ENCODE measurements at regions of chr15 and their contacts with region 1.

Region 1: GRCh38 chr15:41557673-41558399 is 1.2 kb upstream of the TYRO3 start:
- DNase-seq: peak; percentile 52 to 89 (median 70)
- ATAC-seq: peak; percentile 87
- H3K4me3 ChIP-seq: no peak overlapping the region
- H3K4me3 Mint-ChIP-seq: peak overlapping the region; percentile 90
- H3K27ac ChIP-seq: peak overlapping the region in 1 of 2 donors; percentile 0
- H3K27ac Mint-ChIP-seq: peak overlapping the region; percentile 73
- H3K4me1 ChIP-seq: peaks cover 26% of the 10 kb centered on the region
- H3K4me1 Mint-ChIP-seq: peaks cover 31% of the 10 kb centered on the region
- H3K27me3 ChIP-seq: peaks cover 6 to 8% of the 10 kb centered on the region in 2 experiments
- H3K27me3 Mint-ChIP-seq: peaks cover 20% of the 10 kb centered on the region
- CTCF ChIP-seq: peak; percentile 89

Region 2: DNA sequence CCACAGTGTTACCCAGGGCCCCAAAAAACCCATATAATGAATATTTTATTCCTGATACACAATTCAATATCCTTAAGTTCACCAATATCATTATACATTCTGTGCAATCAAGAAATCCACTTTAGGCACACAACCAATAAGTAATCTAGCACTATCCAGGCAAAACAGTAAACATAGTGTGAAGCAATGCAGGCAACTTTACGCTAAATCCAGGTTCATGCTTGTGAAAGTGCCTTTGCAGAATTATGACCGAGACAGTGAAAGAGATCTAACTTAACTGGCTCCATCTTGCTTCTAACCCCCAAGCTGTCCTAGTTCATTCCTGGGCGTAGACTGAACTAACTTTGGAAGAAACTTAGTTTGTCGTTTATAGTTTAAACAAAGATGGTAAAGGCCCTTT is 407.6 kb before region 1 on chr15:
- CTCF ChIA-PET with region 1: no interaction called
- POLR2A ChIA-PET with region 1: no interaction called
- intact Hi-C with region 1: no loop called
- DNase-seq: no peak
- ATAC-seq: no peak
- H3K4me3 ChIP-seq: no peak overlapping the region
- H3K4me3 Mint-ChIP-seq: no peak overlapping the region
- H3K27ac ChIP-seq: no peak overlapping the region
- H3K27ac Mint-ChIP-seq: peak overlapping the region; percentile 53
- H3K4me1 ChIP-seq: peaks cover 9% of the 10 kb centered on the region
- H3K4me1 Mint-ChIP-seq: peaks cover 12% of the 10 kb centered on the region
- H3K27me3 ChIP-seq: no peaks in the 10 kb centered on the region
- H3K27me3 Mint-ChIP-seq: no peaks in the 10 kb centered on the region
- CTCF ChIP-seq: no peak

Region 3: GRCh38 chr15:41332788-41333562 is 224.9 kb before region 1 on chr15 and contains the start of gene NUSAP1:
- CTCF ChIA-PET with region 1: no interaction called
- POLR2A ChIA-PET with region 1: no interaction called
- intact Hi-C with region 1: no loop called
- DNase-seq: peak in 3 of 14 experiments; percentile 46 to 65 (median 58)
- ATAC-seq: peak; percentile 3
- H3K4me3 ChIP-seq: peak within 1 kb of the TSS; percentile 77
- H3K4me3 Mint-ChIP-seq: peak within 1 kb of the TSS; percentile 95
- H3K27ac ChIP-seq: peak within 1 kb of the TSS in 1 of 2 donors; percentile 38
- H3K27ac Mint-ChIP-seq: peak within 1 kb of the TSS; percentile 78
- H3K4me1 ChIP-seq: peaks cover 23% of the 10 kb centered on the region
- H3K4me1 Mint-ChIP-seq: peaks cover 25% of the 10 kb centered on the region
- H3K27me3 ChIP-seq: no peaks in the 10 kb centered on the region
- H3K27me3 Mint-ChIP-seq: no peaks in the 10 kb centered on the region
- CTCF ChIP-seq: no peak
- total RNA-seq, gene NUSAP1: 2.2 to 2.3 TPM

Region 4: DNA sequence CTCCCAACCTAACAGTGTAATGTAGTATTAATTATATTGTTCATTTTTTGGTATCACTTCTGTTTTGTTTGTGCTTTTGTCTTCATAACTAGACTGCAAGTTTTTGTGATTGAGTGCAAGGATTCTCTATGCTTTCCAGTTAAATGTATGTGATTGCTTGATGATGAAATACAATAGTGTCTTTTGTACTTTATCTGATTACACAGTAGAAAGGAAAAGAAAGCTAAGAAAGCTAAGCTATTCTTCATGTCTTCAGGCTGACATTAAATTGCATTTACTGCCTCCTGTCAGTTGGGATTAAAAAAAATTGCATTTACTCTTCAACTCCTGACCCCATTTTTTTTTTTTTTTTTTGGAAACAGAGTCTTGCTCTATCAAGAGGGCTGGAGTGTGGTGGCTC is 112.4 kb before region 1 on chr15:
- CTCF ChIA-PET with region 1: no interaction called
- POLR2A ChIA-PET with region 1: no interaction called
- intact Hi-C with region 1: no loop called
- DNase-seq: no peak
- ATAC-seq: no peak
- H3K4me3 ChIP-seq: no peak overlapping the region
- H3K4me3 Mint-ChIP-seq: no peak overlapping the region
- H3K27ac ChIP-seq: no peak overlapping the region
- H3K27ac Mint-ChIP-seq: no peak overlapping the region
- H3K4me1 ChIP-seq: peaks cover 9% of the 10 kb centered on the region
- H3K4me1 Mint-ChIP-seq: peaks cover 20% of the 10 kb centered on the region
- H3K27me3 ChIP-seq: no peaks in the 10 kb centered on the region
- H3K27me3 Mint-ChIP-seq: no peaks in the 10 kb centered on the region
- CTCF ChIP-seq: no peak

Region 5: DNA sequence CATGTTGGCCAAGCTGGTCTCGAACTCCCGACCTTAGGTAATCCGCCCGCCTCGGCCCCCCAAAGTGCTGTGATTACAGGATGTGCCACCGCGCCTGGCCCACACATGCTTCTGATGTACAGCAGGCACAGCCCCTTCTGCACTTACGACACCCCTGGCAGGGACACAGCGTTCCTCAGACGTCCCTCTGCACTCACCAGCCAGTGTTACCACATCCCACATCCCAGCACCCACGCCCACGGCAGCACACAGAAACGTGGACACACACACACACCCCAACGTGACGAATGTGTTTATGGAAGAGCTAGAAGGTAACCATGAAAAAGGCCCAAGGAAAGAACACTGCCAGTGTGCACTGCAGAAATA is 13.2 kb before region 1 on chr15:
- CTCF ChIA-PET with region 1: interaction called, 21 read pairs
- POLR2A ChIA-PET with region 1: interaction called, 22 read pairs
- intact Hi-C with region 1: loop called in 1 of 2 experiments (anchors 2 kb)
- DNase-seq: peak in 3 of 14 experiments; percentile 23 to 50 (median 44)
- ATAC-seq: no peak
- H3K4me3 ChIP-seq: peak overlapping the region; percentile 98
- H3K4me3 Mint-ChIP-seq: peak overlapping the region; percentile 98
- H3K27ac ChIP-seq: no peak overlapping the region
- H3K27ac Mint-ChIP-seq: peak overlapping the region; percentile 85
- H3K4me1 ChIP-seq: peaks cover 16% of the 10 kb centered on the region
- H3K4me1 Mint-ChIP-seq: peaks cover 29% of the 10 kb centered on the region
- H3K27me3 ChIP-seq: no peaks in the 10 kb centered on the region
- H3K27me3 Mint-ChIP-seq: no peaks in the 10 kb centered on the region
- CTCF ChIP-seq: no peak

Region 6: DNA sequence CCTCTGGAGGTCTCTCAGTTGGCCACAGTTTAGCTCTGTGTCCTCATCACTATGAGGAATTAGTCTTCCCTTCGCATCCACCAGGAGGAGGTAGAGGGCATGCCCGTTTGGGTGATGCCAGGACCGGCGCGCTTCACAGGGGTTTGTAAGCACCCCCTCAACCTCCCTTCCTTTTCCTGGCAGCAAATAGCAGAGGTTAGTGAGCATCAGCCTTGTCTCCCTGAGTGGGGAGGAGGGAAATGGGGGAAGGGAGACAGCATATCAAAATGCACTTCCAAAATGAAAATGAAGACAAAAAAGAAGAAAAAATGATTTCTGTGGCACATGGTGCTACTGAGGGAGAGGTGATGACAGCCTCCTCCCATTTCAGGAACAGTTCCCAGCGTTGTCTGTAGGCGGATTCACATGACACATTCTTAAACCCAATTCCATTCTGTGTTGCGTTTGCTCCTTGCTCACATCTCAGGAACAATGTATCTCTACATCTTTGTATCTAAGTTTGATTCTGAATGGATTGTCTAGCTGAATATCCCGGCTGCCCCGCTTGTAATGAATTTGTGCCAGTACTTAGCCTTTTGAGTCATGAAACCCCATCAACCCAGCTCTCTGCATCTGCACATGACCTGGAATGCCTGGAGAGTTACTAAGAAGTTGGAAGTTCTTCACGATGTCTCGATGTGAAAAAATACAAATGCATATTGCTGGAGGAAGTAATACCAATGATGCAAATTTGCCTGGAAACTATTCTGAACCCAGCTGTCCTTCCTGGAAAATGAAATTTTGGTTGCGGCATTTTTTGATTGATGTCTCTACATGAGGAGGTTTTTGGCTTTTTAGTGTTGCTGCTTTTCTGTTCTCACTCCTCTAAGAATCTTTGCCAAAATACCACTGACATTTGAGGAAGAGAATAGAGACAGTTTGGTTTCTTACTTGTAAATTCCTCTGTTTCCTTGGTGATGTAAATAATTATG is 46.4 kb after region 1 on chr15:
- CTCF ChIA-PET with region 1: interaction called, 10 read pairs
- POLR2A ChIA-PET with region 1: no interaction called
- intact Hi-C with region 1: loop called (anchors 5 kb)
- DNase-seq: peak; percentile 36 to 80 (median 44)
- ATAC-seq: peak; percentile 99
- H3K4me3 ChIP-seq: no peak overlapping the region
- H3K4me3 Mint-ChIP-seq: peak overlapping the region; percentile 38
- H3K27ac ChIP-seq: no peak overlapping the region
- H3K27ac Mint-ChIP-seq: no peak overlapping the region
- H3K4me1 ChIP-seq: peaks cover 6% of the 10 kb centered on the region
- H3K4me1 Mint-ChIP-seq: peaks cover 9% of the 10 kb centered on the region
- H3K27me3 ChIP-seq: no peaks in the 10 kb centered on the region
- H3K27me3 Mint-ChIP-seq: peaks cover 18% of the 10 kb centered on the region
- CTCF ChIP-seq: peak; percentile 84

Region 7: DNA sequence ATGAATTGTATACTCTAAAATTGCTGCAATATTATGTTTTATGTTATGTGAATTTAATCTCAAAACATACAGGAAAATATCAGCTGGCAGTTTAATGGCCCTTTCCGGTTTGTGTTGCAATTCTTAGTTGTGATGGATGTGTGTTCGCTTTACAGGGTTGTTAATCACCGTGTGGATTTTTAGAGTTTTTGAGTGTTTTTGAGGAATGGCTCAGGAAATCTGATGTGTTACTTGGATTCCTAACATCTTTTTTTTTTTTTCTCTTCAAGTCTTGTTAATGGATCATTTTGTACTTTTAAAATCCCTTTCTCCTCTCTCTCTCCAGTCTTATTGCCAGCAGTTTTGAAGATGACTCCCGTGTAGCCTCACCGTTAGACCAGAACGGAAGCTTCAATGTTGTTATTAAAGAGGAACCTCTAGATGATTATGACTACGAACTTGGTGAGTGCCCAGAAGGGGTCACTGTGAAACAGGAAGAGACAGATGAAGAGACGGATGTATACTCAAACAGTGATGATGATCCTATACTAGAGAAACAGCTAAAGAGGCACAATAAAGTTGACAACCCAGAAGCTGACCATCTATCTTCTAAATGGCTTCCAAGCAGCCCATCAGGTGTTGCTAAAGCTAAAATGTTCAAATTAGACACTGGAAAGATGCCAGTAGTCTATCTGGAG is 138.1 kb after region 1 on chr15:
- CTCF ChIA-PET with region 1: interaction called, 5 read pairs
- POLR2A ChIA-PET with region 1: no interaction called
- intact Hi-C with region 1: loop called in 1 of 2 experiments (anchors 5 kb)
- DNase-seq: peak in 12 of 14 experiments; percentile 7 to 78 (median 32)
- ATAC-seq: peak; percentile 96
- H3K4me3 ChIP-seq: no peak overlapping the region
- H3K4me3 Mint-ChIP-seq: peak overlapping the region; percentile 8
- H3K27ac ChIP-seq: no peak overlapping the region
- H3K27ac Mint-ChIP-seq: peak overlapping the region; percentile 54
- H3K4me1 ChIP-seq: peaks cover 7% of the 10 kb centered on the region
- H3K4me1 Mint-ChIP-seq: peaks cover 51% of the 10 kb centered on the region
- H3K27me3 ChIP-seq: no peaks in the 10 kb centered on the region
- H3K27me3 Mint-ChIP-seq: no peaks in the 10 kb centered on the region
- CTCF ChIP-seq: peak; percentile 63

Region 8: DNA sequence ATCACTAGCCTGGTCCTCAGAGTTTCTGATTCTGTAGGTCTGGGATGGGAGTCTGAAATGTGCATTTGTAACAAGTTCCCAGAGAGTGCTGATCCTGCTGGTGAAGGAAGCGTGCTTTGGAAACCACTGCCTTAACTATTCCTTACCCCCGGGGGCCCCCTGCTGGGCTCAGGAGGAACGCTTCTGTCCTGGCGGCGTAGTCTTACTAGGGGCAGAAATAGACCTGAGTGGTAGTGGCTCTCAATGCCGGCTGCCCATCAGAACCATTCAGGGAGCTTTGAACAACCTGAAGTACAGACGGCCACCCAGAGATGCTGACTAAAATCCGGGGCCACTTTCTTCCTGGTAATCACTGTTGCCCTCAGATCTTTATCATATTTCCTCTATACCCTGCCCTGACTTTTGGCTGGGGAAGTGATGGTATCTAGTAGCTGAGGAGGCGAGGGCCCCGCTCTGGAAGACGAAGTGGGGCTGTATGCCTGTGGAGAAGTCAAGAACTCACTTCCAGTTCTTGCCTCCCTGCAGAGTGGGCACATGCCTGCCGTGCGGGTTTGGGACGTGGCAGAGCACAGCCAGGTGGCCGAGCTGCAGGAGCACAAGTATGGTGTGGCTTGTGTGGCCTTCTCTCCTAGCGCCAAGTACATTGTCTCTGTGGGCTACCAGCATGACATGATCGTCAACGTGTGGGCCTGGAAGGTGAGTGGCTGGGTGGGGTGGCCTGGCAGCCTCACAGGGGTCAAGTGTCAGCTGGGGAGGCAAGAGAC is 253.8 kb after region 1 on chr15:
- CTCF ChIA-PET with region 1: interaction called, 3 read pairs
- POLR2A ChIA-PET with region 1: no interaction called
- intact Hi-C with region 1: loop called (anchors 1 to 5 kb)
- DNase-seq: peak; percentile 62 to 88 (median 70)
- ATAC-seq: peak; percentile 97
- H3K4me3 ChIP-seq: no peak overlapping the region
- H3K4me3 Mint-ChIP-seq: no peak overlapping the region
- H3K27ac ChIP-seq: no peak overlapping the region
- H3K27ac Mint-ChIP-seq: peak overlapping the region; percentile 43
- H3K4me1 ChIP-seq: peaks cover 19% of the 10 kb centered on the region
- H3K4me1 Mint-ChIP-seq: peaks cover 12% of the 10 kb centered on the region
- H3K27me3 ChIP-seq: no peaks in the 10 kb centered on the region
- H3K27me3 Mint-ChIP-seq: no peaks in the 10 kb centered on the region
- CTCF ChIP-seq: peak; percentile 92

Region 9: GRCh38 chr15:41972253-41973242 is 414.7 kb after region 1 on chr15 and contains the start of gene EHD4:
- CTCF ChIA-PET with region 1: no interaction called
- POLR2A ChIA-PET with region 1: no interaction called
- intact Hi-C with region 1: loop called in 1 of 2 experiments (anchors 10 kb)
- DNase-seq: peak; percentile 84 to 99 (median 90)
- ATAC-seq: peak; percentile 78
- H3K4me3 ChIP-seq: peak within 1 kb of the TSS; percentile 82
- H3K4me3 Mint-ChIP-seq: peak within 1 kb of the TSS; percentile 98
- H3K27ac ChIP-seq: peak within 1 kb of the TSS; percentile 61 to 81
- H3K27ac Mint-ChIP-seq: peak within 1 kb of the TSS; percentile 95
- H3K4me1 ChIP-seq: peaks cover 40% of the 10 kb centered on the region
- H3K4me1 Mint-ChIP-seq: peaks cover 46% of the 10 kb centered on the region
- H3K27me3 ChIP-seq: peaks cover 0 to 5% of the 10 kb centered on the region in 2 experiments
- H3K27me3 Mint-ChIP-seq: peaks cover 19% of the 10 kb centered on the region
- CTCF ChIP-seq: no peak
- total RNA-seq, gene EHD4: 39.8 to 40.5 TPM

Region 10: DNA sequence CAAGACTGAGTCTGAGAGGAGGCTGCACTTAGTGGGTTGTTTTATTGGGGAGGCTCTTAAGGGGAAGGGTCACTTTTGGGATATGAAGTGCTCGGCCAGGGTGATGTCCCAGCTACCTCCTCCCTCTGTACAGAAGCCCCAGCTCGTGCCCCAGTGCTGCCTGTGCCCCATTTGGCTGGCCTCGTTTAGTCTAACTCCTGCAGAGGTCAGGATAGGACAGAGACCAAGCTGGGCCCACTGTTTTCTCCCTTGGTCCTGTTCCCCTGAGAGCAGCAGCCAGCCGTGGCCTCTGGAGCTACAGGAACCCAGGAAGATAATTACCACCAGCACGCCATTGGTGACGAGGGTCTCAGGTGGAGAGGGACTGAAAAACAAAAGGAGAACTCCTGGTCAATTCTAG is 444.5 kb after region 1 on chr15:
- CTCF ChIA-PET with region 1: no interaction called
- POLR2A ChIA-PET with region 1: no interaction called
- intact Hi-C with region 1: no loop called
- DNase-seq: no peak
- ATAC-seq: no peak
- H3K4me3 ChIP-seq: no peak overlapping the region
- H3K4me3 Mint-ChIP-seq: no peak overlapping the region
- H3K27ac ChIP-seq: no peak overlapping the region
- H3K27ac Mint-ChIP-seq: no peak overlapping the region
- H3K4me1 ChIP-seq: no peaks in the 10 kb centered on the region
- H3K4me1 Mint-ChIP-seq: no peaks in the 10 kb centered on the region
- H3K27me3 ChIP-seq: no peaks in the 10 kb centered on the region
- H3K27me3 Mint-ChIP-seq: no peaks in the 10 kb centered on the region
- CTCF ChIP-seq: no peak

Measured in CD4-positive, alpha-beta T cell (primary cell).